Vagina (tissue), 2 donors: ENCODE measurements at regions of chr7 and their contacts with region 1.

Region 1: GRCh38 chr7:38796626-38797501 is 112.1 kb downstream of the VPS41 start:
- DNase-seq: no peak
- H3K4me3 ChIP-seq: no peak overlapping the region
- H3K27ac ChIP-seq: no peak overlapping the region
- H3K4me1 ChIP-seq: no peaks in the 10 kb centered on the region
- H3K27me3 ChIP-seq: no peaks in the 10 kb centered on the region
- CTCF ChIP-seq: peak; percentile 34 to 81 (median 74)
- POLR2A ChIP-seq: no peak

Region 2: DNA sequence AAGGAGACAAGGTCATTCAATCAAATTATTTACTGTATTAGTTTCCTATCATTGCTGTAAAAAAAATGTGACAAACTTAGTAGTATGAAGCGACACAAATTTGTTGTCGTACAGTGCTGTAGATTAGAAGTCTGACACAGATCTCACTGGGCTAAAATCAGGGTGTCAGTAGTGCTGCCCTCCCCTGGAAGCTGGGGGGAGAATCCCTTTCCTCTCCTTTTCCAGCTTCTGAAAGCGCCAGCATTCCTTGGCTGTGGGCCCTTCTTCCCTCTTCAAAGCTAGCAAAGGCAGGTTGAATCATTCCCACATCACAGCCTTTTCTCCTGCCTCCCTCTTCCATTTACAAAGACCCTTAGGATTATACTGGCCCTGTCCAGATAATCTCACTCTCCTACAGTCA is 84.2 kb after region 1 on chr7:
- intact Hi-C with region 1: no loop called
- DNase-seq: no peak
- H3K4me3 ChIP-seq: no peak overlapping the region
- H3K27ac ChIP-seq: no peak overlapping the region
- H3K4me1 ChIP-seq: no peaks in the 10 kb centered on the region
- H3K27me3 ChIP-seq: no peaks in the 10 kb centered on the region
- CTCF ChIP-seq: no peak
- POLR2A ChIP-seq: no peak

Region 3: DNA sequence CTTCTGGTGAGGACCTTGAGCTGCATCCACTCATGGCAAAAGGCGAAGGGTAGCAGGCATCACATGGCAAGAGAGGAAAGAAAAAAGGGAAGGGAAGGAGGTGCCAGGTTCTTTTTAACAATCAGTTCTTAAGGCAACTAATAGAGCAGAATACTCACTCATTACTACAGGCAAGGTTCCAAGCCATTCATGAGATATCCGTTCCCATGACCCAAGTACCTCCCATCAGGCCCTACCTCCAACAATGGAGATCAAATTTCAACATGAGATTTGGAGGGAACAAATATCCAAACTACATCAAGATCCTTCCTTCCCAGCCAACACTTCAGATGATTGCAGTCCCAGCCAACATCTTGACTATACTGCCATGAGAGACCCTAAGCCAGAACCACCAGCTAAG is 730.4 kb after region 1 on chr7:
- intact Hi-C with region 1: loop called (anchors 10 kb)
- DNase-seq: no peak
- H3K4me3 ChIP-seq: no peak overlapping the region
- H3K27ac ChIP-seq: no peak overlapping the region
- H3K4me1 ChIP-seq: no peaks in the 10 kb centered on the region
- H3K27me3 ChIP-seq: no peaks in the 10 kb centered on the region
- CTCF ChIP-seq: no peak
- POLR2A ChIP-seq: no peak